ENCODE measurements at regions of chr7 and their contacts with region 1.

Region 1: GRCh38 chr7:112449902-112450806 is at the start of gene IFRD1:
- DNase-seq: peak; percentile 98
- ATAC-seq: peak; percentile 82
- H3K4me3 Mint-ChIP-seq: peak within 1 kb of the TSS; percentile 97
- H3K27ac Mint-ChIP-seq: peak within 1 kb of the TSS; percentile 99
- H3K4me1 Mint-ChIP-seq: peaks cover 35% of the 10 kb centered on the region
- H3K27me3 Mint-ChIP-seq: no peaks in the 10 kb centered on the region
- total RNA-seq, gene IFRD1: 40.1 to 42.5 TPM

Region 2: DNA sequence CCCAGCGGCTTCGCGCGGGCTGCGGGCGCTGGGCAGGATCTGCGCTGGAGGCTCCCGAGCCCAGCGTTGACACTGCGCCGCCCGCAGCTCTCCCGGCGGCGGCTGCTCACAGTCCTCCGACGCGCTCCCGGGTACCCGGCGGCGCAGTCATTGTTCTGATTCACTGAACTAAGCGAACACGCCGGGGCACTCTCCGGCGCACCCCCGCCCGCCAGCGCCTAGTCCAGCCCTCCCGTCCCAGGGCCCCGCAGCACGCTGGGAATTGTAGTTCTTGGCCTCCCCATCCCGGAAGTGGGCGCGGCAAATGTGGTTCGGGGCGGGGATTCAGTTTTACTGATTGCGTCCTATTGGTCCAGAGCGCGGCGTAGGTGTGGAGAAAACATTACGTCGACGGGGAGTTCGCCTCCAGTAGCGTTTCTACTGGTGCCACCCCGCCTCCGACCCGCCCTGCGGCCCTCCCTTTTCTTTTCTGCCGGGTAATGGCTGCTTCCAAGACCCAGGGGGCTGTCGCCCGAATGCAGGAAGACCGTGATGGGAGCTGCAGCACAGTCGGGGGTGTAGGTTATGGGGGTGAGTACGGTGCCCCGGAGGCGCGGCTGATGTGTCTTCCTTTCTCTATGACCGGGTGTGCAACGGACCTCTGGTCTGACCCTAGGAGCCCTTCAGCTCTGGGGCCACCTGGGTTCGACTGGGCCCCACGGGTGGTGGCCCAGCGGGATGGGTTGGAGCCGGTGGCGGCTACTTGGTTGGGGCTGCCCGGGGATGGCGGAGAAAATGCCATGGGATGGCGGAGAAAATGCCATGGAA is 243.7 kb before region 1 on chr7 and contains the starts of genes DOCK4 and ZNF277:
- CTCF ChIA-PET with region 1: no interaction called
- POLR2A ChIA-PET with region 1: interaction called, 12 read pairs
- DNase-seq: peak; percentile 99
- ATAC-seq: peak; percentile 96
- H3K4me3 Mint-ChIP-seq: peak within 1 kb of the TSS; percentile 93
- H3K27ac Mint-ChIP-seq: peak within 1 kb of the TSS; percentile 86
- H3K4me1 Mint-ChIP-seq: peaks cover 31% of the 10 kb centered on the region
- H3K27me3 Mint-ChIP-seq: peaks cover 32% of the 10 kb centered on the region
- total RNA-seq, gene DOCK4: 0.10 to 0.18 TPM
- total RNA-seq, gene ZNF277: 14.8 to 15.6 TPM

Region 3: DNA sequence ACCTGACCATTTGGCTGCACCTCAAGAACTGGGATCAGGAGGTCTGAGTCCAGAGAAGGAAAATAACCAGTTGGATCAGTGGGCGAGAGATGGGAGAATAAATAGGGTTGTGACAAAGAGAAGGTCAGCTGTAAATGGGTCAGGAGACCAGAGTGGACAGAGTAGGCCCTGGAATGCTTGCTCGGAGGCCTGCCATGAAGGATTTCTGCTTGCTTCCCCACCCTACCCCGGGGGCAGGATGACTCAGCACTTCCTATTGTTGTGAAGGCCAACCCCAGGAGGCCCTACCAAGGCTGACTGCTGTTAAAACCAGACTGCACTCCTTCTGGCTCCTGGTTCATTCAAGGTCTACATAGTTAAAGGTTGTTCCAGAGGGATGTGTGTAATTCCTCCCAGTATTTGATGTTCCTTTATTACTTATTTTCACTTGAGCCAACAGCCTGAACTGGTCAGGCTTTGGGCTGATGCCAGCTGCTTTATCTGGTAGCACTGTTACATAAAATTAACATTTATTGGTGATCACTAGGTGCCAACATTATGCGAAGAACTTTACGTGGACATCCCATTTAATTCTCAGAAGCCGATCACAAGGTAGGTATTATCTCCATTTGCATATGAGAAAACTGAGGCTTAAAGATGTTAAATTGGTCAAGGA is 27.2 kb before region 1 on chr7:
- CTCF ChIA-PET with region 1: interaction called, 14 read pairs
- POLR2A ChIA-PET with region 1: interaction called, 18 read pairs
- DNase-seq: peak; percentile 24
- ATAC-seq: no peak
- H3K4me3 Mint-ChIP-seq: no peak overlapping the region
- H3K27ac Mint-ChIP-seq: no peak overlapping the region
- H3K4me1 Mint-ChIP-seq: peaks cover 23% of the 10 kb centered on the region
- H3K27me3 Mint-ChIP-seq: no peaks in the 10 kb centered on the region

Region 4: DNA sequence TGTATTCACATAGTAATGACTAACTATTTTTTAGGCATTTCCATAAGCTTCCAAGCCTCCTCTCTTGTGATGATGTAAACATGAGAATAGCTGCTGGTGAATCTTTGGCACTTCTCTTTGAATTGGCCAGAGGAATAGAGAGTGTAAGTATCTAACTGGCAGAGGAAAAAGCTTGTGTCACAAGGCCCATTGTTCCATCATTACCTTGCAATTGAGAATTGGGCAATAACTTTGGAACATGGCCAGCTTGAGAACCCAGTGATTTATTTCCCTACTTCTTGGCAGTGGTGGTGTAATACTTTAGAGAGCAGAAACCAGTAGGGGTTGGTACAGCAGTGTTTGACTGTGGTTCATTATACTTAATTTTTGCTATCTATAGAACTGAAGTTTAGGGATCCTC is 12.1 kb after region 1 on chr7:
- CTCF ChIA-PET with region 1: interaction called, 11 read pairs
- POLR2A ChIA-PET with region 1: interaction called, 5 read pairs
- DNase-seq: no peak
- ATAC-seq: no peak
- H3K4me3 Mint-ChIP-seq: no peak overlapping the region
- H3K27ac Mint-ChIP-seq: no peak overlapping the region
- H3K4me1 Mint-ChIP-seq: no peaks in the 10 kb centered on the region
- H3K27me3 Mint-ChIP-seq: no peaks in the 10 kb centered on the region

Region 5: DNA sequence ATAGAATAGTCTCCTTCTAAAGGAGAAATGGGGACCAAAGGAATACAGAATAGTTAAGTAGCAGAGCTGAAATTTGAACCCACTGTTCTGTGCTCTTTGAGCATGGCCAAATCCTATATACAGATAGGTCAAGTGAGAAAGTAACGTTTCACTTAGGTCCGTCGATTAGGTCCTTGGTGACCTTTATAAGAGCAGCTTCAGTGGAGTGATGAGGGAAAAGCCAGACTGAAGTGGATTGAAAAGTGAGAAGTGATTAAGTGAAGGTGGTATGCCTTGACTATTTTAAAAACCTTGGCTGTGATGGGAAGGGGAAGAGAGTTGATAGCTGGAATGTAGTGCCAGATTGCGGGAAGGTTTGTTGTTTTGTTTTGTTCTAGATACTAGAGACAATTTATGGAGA is 20.0 kb after region 1 on chr7:
- CTCF ChIA-PET with region 1: no interaction called
- POLR2A ChIA-PET with region 1: interaction called, 11 read pairs
- DNase-seq: no peak
- ATAC-seq: no peak
- H3K4me3 Mint-ChIP-seq: no peak overlapping the region
- H3K27ac Mint-ChIP-seq: no peak overlapping the region
- H3K4me1 Mint-ChIP-seq: no peaks in the 10 kb centered on the region
- H3K27me3 Mint-ChIP-seq: no peaks in the 10 kb centered on the region

Region 6: GRCh38 chr7:112538726-112539255 is 88.6 kb after region 1 on chr7:
- CTCF ChIA-PET with region 1: no interaction called
- POLR2A ChIA-PET with region 1: no interaction called
- DNase-seq: no peak
- ATAC-seq: no peak
- H3K4me3 Mint-ChIP-seq: no peak overlapping the region
- H3K27ac Mint-ChIP-seq: no peak overlapping the region
- H3K4me1 Mint-ChIP-seq: no peaks in the 10 kb centered on the region
- H3K27me3 Mint-ChIP-seq: peaks cover 6% of the 10 kb centered on the region

Region 7: DNA sequence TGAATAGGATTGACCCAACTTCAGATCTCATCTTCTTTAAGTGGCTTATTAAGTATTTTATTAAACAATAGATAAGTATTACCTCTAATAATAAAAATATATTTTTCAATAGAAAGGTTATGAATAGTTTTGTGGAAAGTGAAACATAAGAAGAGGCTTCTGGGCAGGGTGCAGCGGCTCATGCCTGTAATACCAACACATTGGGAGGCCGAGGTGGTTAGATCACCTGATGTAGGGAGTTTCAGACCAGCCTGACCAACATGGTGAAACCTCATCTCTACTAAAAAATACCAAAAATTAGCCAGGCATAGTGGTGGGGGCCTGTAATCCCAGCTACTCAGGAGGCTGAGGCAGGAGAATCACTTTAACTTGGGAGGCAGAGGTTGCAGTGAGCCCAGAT is 609.9 kb after region 1 on chr7:
- CTCF ChIA-PET with region 1: no interaction called
- POLR2A ChIA-PET with region 1: no interaction called
- DNase-seq: no peak
- ATAC-seq: no peak
- H3K4me3 Mint-ChIP-seq: no peak overlapping the region
- H3K27ac Mint-ChIP-seq: no peak overlapping the region
- H3K4me1 Mint-ChIP-seq: no peaks in the 10 kb centered on the region
- H3K27me3 Mint-ChIP-seq: no peaks in the 10 kb centered on the region